ENCODE measurements at regions of chr13 and their contacts with region 1.

Region 1: GRCh38 chr13:23707674-23708073 is 137.5 kb downstream of the TNFRSF19 start:
- DNase-seq: no peak
- ATAC-seq: no peak

Region 2: DNA sequence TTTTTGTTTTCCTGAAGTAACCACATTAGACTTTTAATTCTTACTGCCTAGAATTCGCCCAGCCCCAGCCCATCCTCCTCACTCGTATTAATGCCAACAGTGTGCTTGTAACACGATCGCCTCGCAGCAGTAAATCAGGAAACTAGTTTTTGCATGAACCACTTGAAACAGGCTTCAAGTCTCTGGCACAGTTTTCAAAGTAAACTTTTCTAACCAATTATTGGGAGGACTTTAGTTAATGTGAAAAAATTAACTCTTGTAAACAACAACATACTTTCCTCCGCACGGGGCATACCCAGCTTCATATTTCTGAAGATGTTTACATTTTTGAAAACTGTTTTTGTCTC is 98.3 kb before region 1 on chr13:
- intact Hi-C with region 1: loop called (anchors 10 kb)
- DNase-seq: no peak
- ATAC-seq: peak; percentile 81